ENCODE measurements at regions of chr1 and their contacts with region 1.

Region 1: GRCh38 chr1:117895482-117896114 is 33.8 kb downstream of the GDAP2 start:
- DNase-seq: peak; percentile 38
- ATAC-seq: peak; percentile 68; the same call in 1 of the 2 replicates
- H3K4me3 ChIP-seq: no peak overlapping the region
- H3K27ac ChIP-seq: no peak overlapping the region
- H3K4me1 ChIP-seq: no peaks in the 10 kb centered on the region
- H3K27me3 ChIP-seq: no peaks in the 10 kb centered on the region
- CTCF ChIP-seq: peak; percentile 77

Region 2: DNA sequence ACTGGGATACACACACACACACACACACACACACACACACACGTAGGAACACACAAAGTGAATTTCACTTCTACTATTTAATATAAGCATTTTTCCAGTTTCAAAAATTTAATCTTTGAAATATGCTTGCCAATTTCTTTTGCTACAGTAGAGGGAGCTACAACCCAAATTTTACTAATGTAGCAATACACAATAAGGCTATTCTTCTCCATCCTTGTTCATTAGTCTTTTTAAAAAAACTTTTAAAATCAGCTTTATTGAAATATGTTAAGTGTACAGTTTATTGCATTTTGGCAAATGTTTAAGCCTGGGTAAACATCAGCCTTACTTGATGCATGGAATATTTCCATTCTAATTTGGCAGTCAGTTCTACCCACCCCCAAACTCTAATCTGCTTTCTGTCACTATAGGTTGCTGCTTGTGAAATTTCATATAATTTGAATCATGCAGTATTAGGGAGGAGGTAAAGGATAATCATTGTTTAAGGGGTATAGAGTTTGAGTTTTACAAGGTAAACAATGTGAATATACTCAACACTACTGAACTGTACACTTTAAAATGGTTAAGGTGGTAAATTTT is 382.8 kb before region 1 on chr1:
- CTCF ChIA-PET with region 1: interaction called, 3 read pairs
- POLR2A ChIA-PET with region 1: no interaction called
- in situ Hi-C with region 1: no loop called
- intact Hi-C with region 1: loop called (anchors 10 kb)
- DNase-seq: no peak
- ATAC-seq: no peak
- H3K4me3 ChIP-seq: no peak overlapping the region
- H3K27ac ChIP-seq: no peak overlapping the region
- H3K4me1 ChIP-seq: no peaks in the 10 kb centered on the region
- H3K27me3 ChIP-seq: no peaks in the 10 kb centered on the region
- CTCF ChIP-seq: peak; percentile 51; the same call in 1 of the 2 replicates

Region 3: GRCh38 chr1:117815926-117816325 is 79.7 kb before region 1 on chr1:
- CTCF ChIA-PET with region 1: no interaction called
- POLR2A ChIA-PET with region 1: no interaction called
- in situ Hi-C with region 1: no loop called
- intact Hi-C with region 1: loop called (anchors 10 kb)
- DNase-seq: no peak
- ATAC-seq: no peak
- H3K4me3 ChIP-seq: no peak overlapping the region
- H3K27ac ChIP-seq: no peak overlapping the region
- H3K4me1 ChIP-seq: no peaks in the 10 kb centered on the region
- H3K27me3 ChIP-seq: no peaks in the 10 kb centered on the region
- CTCF ChIP-seq: peak; percentile 17

Region 4: GRCh38 chr1:117842240-117843170 is 53.1 kb before region 1 on chr1:
- CTCF ChIA-PET with region 1: no interaction called
- POLR2A ChIA-PET with region 1: no interaction called
- in situ Hi-C with region 1: no loop called
- intact Hi-C with region 1: no loop called
- DNase-seq: no peak
- ATAC-seq: no peak
- H3K4me3 ChIP-seq: no peak overlapping the region
- H3K27ac ChIP-seq: no peak overlapping the region
- H3K4me1 ChIP-seq: no peaks in the 10 kb centered on the region
- H3K27me3 ChIP-seq: no peaks in the 10 kb centered on the region
- CTCF ChIP-seq: no peak

Measured in Panc1 (cell line).